Endothelial cell of umbilical vein (primary cell): ENCODE measurements at regions of chr22 and their contacts with region 1.

Region 1: DNA sequence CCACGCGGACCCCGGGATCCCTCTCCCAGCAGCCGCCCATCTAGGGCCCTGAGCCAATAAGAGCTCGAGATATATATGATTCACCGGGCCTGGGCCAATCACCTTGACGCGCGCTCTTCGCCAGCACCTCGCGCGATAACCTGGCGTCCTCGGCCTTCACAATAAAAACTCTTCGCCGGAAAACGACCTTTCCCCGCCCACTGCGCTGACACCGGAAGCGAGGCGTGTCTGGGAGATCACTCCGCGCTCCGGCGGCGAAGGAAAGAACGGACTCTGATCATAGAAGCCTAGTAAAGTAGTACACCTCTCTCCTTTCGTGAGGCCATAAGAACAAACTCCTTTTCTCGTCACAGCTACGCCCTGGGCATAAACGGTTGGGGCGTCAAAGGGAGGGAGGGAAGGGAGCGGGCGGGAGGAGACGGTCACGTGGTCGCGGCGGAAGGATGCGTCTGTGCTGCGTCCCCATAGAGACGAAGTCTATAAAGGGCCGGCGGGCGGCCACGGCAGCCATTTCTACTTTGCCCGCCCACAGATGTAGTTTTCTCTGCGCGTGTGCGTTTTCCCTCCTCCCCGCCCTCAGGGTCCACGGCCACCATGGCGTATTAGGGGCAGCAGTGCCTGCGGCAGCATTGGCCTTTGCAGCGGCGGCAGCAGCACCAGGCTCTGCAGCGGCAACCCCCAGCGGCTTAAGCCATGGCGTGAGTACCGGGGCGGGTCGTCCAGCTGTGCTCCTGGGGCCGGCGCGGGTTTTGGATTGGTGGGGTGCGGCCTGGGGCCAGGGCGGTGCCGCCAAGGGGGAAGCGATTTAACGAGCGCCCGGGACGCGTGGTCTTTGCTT is at the start of gene ATF4:
- DNase-seq: peak; percentile 98
- H3K4me3 ChIP-seq: peak within 1 kb of the TSS; percentile 59 to 96 (median 92)
- H3K27ac ChIP-seq: peak within 1 kb of the TSS; percentile 93
- H3K4me1 ChIP-seq: peaks cover 15% of the 10 kb centered on the region
- H3K27me3 ChIP-seq: no peaks in the 10 kb centered on the region
- CTCF ChIP-seq: no peak
- POLR2A ChIP-seq: peak; percentile 97
- total RNA-seq, gene ATF4: 312 and 324 TPM in 2 replicates

Region 2: DNA sequence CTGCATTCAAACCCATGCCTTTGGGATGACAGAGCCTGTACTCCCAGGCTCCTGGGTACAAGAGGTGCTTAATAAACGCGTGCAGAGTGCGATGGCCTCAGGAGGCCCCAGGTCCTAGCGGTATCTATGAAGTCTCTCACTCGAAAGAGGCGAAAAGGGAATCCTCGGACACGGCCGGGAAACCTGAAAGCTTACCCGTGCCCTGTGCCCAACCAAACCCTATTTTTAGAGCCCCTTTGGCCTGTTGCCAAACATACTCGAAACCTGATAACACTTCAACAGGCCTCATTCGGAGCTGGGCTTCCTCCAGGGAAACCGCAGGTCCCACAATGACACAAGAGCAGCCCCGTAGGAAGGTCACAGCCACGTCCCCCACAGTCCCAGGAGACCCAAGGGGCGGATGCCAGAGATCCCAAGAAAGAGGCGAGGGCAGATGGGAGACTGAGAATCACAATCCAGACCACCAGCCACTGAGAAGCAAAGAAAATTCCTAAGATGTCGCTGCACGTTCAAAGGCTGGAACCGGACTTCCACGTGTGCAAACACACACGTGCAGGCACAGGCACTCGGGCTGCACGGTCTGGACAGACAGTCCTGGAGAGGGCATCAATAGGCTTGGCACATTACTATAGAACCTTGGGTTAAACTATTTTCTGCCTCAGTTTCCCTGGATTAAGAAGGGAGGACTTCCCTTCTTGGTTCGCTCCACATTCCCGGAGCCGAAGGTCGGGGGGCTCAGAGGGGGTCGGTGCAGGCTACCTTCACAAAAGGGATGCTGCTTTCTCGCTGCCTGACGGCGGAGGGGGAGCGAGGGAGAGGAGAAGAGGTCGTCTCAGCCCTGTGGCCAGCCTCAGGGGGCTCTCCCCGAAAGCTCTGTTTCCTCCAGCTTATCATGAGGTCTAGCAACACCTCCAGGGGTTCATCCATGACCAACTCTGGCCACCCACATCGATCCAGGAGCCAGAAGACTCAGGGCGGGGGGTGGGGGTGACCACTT is 283.7 kb before region 1 on chr22:
- CTCF ChIA-PET with region 1: no interaction called
- POLR2A ChIA-PET with region 1: interaction called, 10 read pairs
- dilution Hi-C with region 1: no loop called
- intact Hi-C with region 1: no loop called
- DNase-seq: no peak
- H3K4me3 ChIP-seq: no peak overlapping the region
- H3K27ac ChIP-seq: peak overlapping the region; percentile 88
- H3K4me1 ChIP-seq: peaks cover 91% of the 10 kb centered on the region
- H3K27me3 ChIP-seq: no peaks in the 10 kb centered on the region
- CTCF ChIP-seq: no peak
- POLR2A ChIP-seq: peak; percentile 19

Region 3: GRCh38 chr22:39253435-39254070 is 266.7 kb before region 1 on chr22:
- CTCF ChIA-PET with region 1: no interaction called
- POLR2A ChIA-PET with region 1: no interaction called
- dilution Hi-C with region 1: no loop called
- intact Hi-C with region 1: loop called (anchors 10 kb)
- DNase-seq: peak; percentile 92
- H3K4me3 ChIP-seq: no peak overlapping the region
- H3K27ac ChIP-seq: peak overlapping the region; percentile 96
- H3K4me1 ChIP-seq: peaks cover 38% of the 10 kb centered on the region
- H3K27me3 ChIP-seq: no peaks in the 10 kb centered on the region
- CTCF ChIP-seq: no peak
- POLR2A ChIP-seq: no peak

Region 4: DNA sequence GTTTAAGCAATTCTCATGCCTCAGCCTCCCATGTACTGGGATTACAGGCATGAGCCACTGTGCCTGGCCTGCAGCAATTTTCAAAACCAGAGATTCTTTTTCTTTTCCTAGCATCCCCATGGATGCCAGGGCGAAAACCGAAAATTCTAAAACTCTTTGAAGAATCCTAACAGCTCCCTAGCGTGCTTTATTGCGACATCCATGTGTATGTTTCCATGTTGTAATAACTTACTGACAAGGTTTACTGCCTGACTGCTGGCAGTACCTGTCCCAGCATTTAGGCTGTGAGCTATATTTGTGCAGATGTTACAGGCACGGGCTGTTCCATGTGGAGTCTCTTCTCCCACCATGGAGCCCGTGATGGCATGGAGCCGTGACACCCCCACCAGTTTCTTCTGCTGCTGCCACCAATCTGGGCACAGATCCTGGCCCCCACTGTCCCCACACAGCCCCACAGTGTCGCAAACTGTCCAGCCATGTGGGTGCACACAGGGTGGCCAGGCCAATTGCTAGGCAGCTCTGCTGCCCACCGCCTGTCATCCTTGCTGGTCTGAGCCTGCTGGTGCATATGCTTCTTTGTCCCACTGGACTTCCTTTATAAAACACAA is 127.8 kb before region 1 on chr22:
- CTCF ChIA-PET with region 1: no interaction called
- POLR2A ChIA-PET with region 1: no interaction called
- dilution Hi-C with region 1: no loop called
- intact Hi-C with region 1: loop called (anchors 5 kb)
- DNase-seq: no peak
- H3K4me3 ChIP-seq: no peak overlapping the region
- H3K27ac ChIP-seq: no peak overlapping the region
- H3K4me1 ChIP-seq: peaks cover 4% of the 10 kb centered on the region
- H3K27me3 ChIP-seq: peaks cover 0 to 2% of the 10 kb centered on the region in 2 experiments
- CTCF ChIP-seq: no peak
- POLR2A ChIP-seq: no peak

Region 5: GRCh38 chr22:39496131-39496838 is 24.0 kb before region 1 on chr22:
- CTCF ChIA-PET with region 1: interaction called, 49 read pairs
- POLR2A ChIA-PET with region 1: interaction called, 6 read pairs
- dilution Hi-C with region 1: no loop called
- intact Hi-C with region 1: no loop called
- DNase-seq: peak; percentile 60
- H3K4me3 ChIP-seq: no peak overlapping the region
- H3K27ac ChIP-seq: no peak overlapping the region
- H3K4me1 ChIP-seq: no peaks in the 10 kb centered on the region
- H3K27me3 ChIP-seq: peaks cover 0 to 3% of the 10 kb centered on the region in 2 experiments
- CTCF ChIP-seq: peak; percentile 84 to 85
- POLR2A ChIP-seq: no peak

Region 6: GRCh38 chr22:39502109-39502788 is 18.0 kb before region 1 on chr22 and contains the start of gene MIEF1:
- CTCF ChIA-PET with region 1: interaction called, 36 read pairs
- POLR2A ChIA-PET with region 1: interaction called, 12 read pairs
- dilution Hi-C with region 1: no loop called
- intact Hi-C with region 1: loop called (anchors 1 kb)
- DNase-seq: peak; percentile 96
- H3K4me3 ChIP-seq: peak within 1 kb of the TSS; percentile 51 to 76 (median 67)
- H3K27ac ChIP-seq: peak within 1 kb of the TSS; percentile 5
- H3K4me1 ChIP-seq: peaks cover 12% of the 10 kb centered on the region
- H3K27me3 ChIP-seq: peaks cover 0 to 3% of the 10 kb centered on the region in 2 experiments
- CTCF ChIP-seq: no peak
- POLR2A ChIP-seq: peak; percentile 79
- total RNA-seq, gene MIEF1: 24.7 and 31.1 TPM in 2 replicates

Region 7: GRCh38 chr22:39559454-39560105 is 39.3 kb after region 1 on chr22:
- CTCF ChIA-PET with region 1: no interaction called
- POLR2A ChIA-PET with region 1: no interaction called
- dilution Hi-C with region 1: no loop called
- intact Hi-C with region 1: no loop called
- DNase-seq: no peak
- H3K4me3 ChIP-seq: no peak overlapping the region
- H3K27ac ChIP-seq: no peak overlapping the region
- H3K4me1 ChIP-seq: no peaks in the 10 kb centered on the region
- H3K27me3 ChIP-seq: peaks cover 31 to 33% of the 10 kb centered on the region in 2 experiments
- CTCF ChIP-seq: peak; percentile 43 to 64
- POLR2A ChIP-seq: no peak

Region 8: GRCh38 chr22:39703928-39704639 is 183.8 kb after region 1 on chr22:
- CTCF ChIA-PET with region 1: no interaction called
- POLR2A ChIA-PET with region 1: no interaction called
- dilution Hi-C with region 1: no loop called
- intact Hi-C with region 1: no loop called
- DNase-seq: no peak
- H3K4me3 ChIP-seq: no peak overlapping the region
- H3K27ac ChIP-seq: no peak overlapping the region
- H3K4me1 ChIP-seq: no peaks in the 10 kb centered on the region
- H3K27me3 ChIP-seq: no peaks in the 10 kb centered on the region
- CTCF ChIP-seq: no peak
- POLR2A ChIP-seq: no peak